Activated naive CD8-positive, alpha-beta T cell treated with anti-CD3 and anti-CD28 coated beads, Interleukin-2, amount 10 ng/mL, durations not matched to agents 7 days and 5 days (primary cell): ENCODE measurements at regions of chr19 and their contacts with region 1.

Region 1: GRCh38 chr19:47130591-47131227 is at the start of gene SAE1:
- DNase-seq: peak; percentile 96
- ATAC-seq: peak; percentile 92
- H3K4me3 Mint-ChIP-seq: peak within 1 kb of the TSS; percentile 94
- H3K27ac Mint-ChIP-seq: peak within 1 kb of the TSS; percentile 93
- H3K4me1 Mint-ChIP-seq: peaks cover 38% of the 10 kb centered on the region
- H3K27me3 Mint-ChIP-seq: no peaks in the 10 kb centered on the region
- total RNA-seq, gene SAE1: 108 to 114 TPM

Region 2: GRCh38 chr19:46975925-46976782 is 154.6 kb before region 1 on chr19:
- POLR2A ChIA-PET with region 1: no interaction called
- DNase-seq: no peak
- ATAC-seq: no peak
- H3K4me3 Mint-ChIP-seq: no peak overlapping the region
- H3K27ac Mint-ChIP-seq: no peak overlapping the region
- H3K4me1 Mint-ChIP-seq: peaks cover 23% of the 10 kb centered on the region
- H3K27me3 Mint-ChIP-seq: no peaks in the 10 kb centered on the region

Region 3: DNA sequence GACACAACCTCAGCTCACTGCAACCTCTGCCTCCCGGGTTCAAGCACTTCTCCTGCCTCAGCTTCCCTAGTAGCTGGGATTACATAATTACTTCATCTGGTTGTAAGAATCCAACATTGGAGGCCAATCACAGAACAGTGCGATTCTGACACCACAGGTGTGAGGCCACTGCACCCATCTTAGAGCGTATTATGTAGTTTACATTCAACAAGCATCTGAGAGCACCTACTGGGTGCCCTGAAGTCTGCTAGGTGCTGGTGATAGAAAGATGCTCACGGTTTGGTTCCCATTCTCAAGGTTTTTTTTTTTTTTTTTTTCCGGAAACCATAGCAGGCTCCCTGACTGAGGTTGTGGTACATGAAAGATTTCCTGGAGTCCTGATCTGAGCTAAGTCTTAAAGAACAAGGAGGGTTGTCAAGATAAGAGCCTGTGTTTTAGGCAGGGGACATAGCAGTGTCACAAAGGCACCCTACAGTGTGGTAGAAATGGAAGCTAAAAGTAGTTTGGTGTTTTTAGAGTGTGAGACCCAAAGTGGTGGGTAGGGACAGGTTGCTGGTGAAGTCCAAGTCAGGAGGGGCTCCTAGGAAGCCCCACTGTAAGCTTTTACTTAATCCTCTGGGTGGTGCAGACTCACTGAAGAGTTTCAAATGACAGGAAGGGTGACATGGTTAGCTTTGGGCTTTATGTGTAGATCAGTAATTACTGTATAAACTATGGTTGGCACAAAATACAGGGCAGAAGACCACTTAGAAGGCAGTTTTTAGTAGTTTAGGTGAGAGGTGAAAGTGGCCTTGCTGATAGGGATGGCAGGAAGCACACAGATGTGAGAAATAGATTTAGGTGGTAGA is 15.2 kb after region 1 on chr19:
- POLR2A ChIA-PET with region 1: interaction called, 10 read pairs
- DNase-seq: no peak
- ATAC-seq: peak; percentile 89
- H3K4me3 Mint-ChIP-seq: peak overlapping the region; percentile 60
- H3K27ac Mint-ChIP-seq: peak overlapping the region; percentile 89
- H3K4me1 Mint-ChIP-seq: peaks cover 46% of the 10 kb centered on the region
- H3K27me3 Mint-ChIP-seq: no peaks in the 10 kb centered on the region

Region 4: DNA sequence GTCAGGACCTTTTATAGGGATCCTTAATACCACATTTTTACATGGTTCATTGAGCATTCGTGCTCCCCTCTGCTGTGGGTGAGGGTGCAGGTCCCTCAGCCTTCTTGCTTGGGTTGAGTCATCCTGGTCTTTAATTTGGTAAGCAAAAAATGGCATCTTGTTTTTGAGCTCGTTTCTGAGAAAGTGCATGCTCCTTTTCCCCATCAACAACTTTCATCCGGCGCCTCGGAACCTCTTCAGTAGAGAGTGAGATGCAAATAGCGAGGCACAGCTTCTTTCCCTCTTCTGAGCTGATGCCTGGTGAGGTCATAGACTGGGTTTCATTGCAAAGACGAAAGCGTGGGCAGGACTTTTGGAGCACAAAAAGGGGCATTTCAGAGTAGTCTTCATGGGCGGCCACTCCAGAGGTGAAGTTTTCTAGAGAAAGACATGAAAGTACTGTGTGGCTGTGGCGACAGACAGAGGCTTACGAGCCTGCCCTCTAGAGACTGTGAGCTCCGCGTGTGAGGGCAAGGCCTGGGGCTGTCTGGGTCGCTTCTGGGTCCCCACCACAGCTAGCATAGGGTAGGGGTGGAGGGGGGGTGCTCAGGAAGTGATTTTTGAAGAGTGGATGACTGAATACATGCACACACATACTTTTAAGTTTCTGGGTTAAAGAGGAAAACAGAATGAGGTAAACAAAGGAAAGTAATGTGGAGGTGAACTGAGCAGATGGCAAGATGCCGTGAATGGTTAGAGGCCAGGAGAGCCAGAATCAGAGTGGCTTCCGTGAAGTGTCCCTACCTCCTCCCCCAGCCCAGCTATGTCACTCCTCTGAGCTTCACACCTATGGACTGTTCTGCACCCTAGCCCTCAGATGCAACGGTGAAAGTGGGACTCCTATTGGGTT is 56.0 kb after region 1 on chr19:
- POLR2A ChIA-PET with region 1: interaction called, 19 read pairs
- DNase-seq: peak; percentile 69
- ATAC-seq: peak; percentile 81
- H3K4me3 Mint-ChIP-seq: peak overlapping the region; percentile 81
- H3K27ac Mint-ChIP-seq: peak overlapping the region; percentile 99
- H3K4me1 Mint-ChIP-seq: peaks cover 60% of the 10 kb centered on the region
- H3K27me3 Mint-ChIP-seq: no peaks in the 10 kb centered on the region